Gastrocnemius medialis (tissue), 4 donors: ENCODE measurements at regions of chr1 and their contacts with region 1.

Region 1: DNA sequence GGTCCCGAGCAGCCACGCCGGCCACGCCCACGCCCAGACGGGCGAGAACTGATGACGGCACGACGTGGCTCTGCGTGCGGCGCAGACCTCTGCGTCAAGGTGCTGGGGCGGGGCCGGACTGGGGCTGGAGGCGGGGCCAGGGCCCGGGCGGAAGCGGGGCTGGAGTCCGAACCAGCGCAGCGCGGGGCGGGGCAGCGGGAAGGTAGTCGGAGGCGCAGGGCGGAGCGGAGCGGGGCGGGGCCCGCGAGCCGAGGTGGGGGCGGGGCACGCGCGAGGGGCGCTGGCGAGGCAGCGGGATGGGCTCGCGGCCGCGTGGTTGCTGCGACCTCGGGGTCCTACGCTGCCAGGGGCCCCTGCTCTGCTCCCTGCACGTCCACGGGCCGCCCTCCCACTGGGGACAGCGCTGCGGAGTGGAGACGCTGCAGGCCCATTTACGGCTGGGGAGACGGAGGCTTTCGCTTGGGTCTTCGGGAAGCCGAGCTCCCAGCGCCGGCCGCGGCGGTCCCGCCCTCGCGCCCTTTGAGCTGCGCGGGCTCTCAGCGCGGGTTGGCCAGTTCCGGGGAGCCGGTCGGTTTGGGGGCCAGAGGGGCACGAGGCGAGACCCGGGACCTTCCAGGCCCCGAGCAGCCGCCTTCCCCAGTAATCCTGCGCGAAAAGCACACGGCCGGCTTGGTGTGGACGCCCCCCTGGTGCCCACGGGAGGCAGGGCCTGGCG is at the start of gene PEX10:
- DNase-seq: peak; percentile 94 to 95
- ATAC-seq: peak; percentile 91 to 93
- H3K4me3 ChIP-seq: peak within 1 kb of the TSS; percentile 64 to 97 (median 74)
- H3K27ac ChIP-seq: peak within 1 kb of the TSS; percentile 67 to 81 (median 78)
- H3K4me1 ChIP-seq: peaks cover 22 to 24% of the 10 kb centered on the region in 2 donors
- H3K27me3 ChIP-seq: peaks cover 14 to 26% (median 22%) of the 10 kb centered on the region in 3 donors
- CTCF ChIP-seq: no peak
- POLR2A ChIP-seq: peak in 1 of 2 donors; percentile 55
- total RNA-seq, gene PEX10: 19.2 to 25.7 (median 22.6) TPM

Region 2: DNA sequence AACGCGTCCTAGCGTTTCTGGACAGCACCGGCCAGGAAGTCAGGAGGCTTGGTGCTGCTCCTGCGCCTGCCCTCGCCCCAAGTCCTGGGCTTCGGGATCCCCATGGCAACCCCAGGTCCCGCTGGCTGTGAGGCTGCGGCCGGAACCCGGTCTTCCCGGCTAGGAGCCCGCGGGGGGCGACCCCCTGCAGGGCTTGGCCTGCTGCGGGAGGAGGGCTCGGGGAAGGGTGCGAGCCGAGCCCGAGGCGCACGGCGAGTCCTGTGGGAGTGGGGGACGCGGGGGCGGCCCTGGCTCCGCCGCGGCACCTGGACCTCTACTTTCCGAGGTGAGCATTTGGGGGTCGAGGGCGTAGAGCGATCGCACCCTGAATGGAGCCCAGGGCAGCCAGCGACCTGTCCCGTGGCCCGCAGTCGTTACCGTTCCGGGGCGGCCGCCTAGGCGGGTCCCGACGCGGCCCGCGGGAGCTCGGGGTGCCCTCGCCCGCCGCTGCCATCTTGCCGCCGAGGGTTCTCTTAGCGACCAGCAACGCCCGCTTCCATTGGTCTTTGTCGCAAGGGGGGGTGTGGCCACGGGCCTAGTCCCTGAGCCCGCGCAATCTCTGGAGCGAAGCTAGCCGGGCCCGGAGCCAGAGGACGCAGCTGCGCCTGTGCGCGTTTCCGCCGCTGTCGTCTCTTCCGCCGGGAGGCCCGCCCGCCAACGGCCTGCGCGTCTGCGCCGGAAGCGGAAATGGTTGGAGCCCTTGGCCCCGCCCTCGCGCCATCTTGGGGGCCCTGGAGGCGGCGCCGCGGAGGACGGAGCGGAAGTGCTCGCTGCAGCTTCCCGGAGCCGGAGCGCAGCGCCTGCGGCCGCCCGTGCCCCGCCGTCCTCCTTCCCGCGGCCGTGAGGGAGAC is 21.4 kb before region 1 on chr1 and contains the starts of genes MORN1 and RER1:
- in situ Hi-C with region 1: no loop called
- intact Hi-C with region 1: loop called (anchors 1 kb)
- DNase-seq: peak; percentile 98
- ATAC-seq: peak; percentile 97 to 99
- H3K4me3 ChIP-seq: peak within 1 kb of the TSS; percentile 77 to 86 (median 84)
- H3K27ac ChIP-seq: peak within 1 kb of the TSS; percentile 67 to 90 (median 85)
- H3K4me1 ChIP-seq: peaks cover 27 to 33% of the 10 kb centered on the region in 2 donors
- H3K27me3 ChIP-seq: no peaks in the 10 kb centered on the region
- CTCF ChIP-seq: no peak
- POLR2A ChIP-seq: peak; percentile 82 to 96
- total RNA-seq, gene MORN1: 1.9 to 4.7 (median 3.5) TPM
- total RNA-seq, gene RER1: 51.1 to 60.5 (median 55.4) TPM

Region 3: DNA sequence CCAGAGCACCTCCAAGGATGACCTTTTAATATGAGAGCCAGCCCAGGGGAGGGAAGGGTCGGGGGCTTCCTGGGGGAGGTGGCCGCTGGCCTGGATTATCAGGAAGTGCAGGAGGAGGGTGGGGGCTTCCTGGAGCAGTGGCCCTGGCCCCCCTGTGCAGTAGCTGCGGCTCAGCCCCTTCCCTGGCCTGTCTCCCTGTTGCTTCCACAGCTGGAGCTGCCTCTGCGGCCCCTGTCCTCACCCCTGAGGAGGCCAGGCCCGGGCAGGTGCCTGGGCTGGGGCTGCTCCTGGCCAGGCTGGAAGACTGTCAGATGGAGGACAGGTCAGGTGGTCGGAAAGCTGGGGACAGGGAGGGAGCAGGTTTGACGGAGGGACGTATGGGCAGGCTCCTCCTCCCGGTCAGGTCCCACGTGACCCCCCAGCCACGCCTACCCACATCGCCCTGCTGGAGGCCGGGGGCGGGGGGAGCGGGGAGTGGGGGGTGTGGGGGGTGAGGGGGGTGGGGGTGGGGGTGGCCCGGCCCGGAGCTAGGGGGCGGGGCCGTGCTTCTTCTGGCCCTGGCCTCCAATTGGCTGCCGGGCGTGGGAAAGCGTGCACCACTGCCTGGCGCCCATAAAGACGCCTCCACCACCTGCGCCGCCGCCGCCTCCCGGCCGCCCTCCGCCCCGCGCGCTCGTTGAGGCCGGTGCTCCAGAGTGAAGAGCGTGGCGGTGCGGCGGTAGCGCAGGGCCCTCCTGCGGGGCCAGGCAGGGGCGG is 133.3 kb after region 1 on chr1:
- in situ Hi-C with region 1: loop called (anchors 10 kb)
- intact Hi-C with region 1: loop called (anchors 1 kb)
- DNase-seq: peak; percentile 73 to 76
- ATAC-seq: peak in 1 of 2 donors; percentile 55
- H3K4me3 ChIP-seq: peak overlapping the region; percentile 53 to 63 (median 56)
- H3K27ac ChIP-seq: peak overlapping the region; percentile 86 to 94 (median 88)
- H3K4me1 ChIP-seq: peaks cover 14 to 35% of the 10 kb centered on the region in 2 donors
- H3K27me3 ChIP-seq: peaks cover 14 to 35% (median 29%) of the 10 kb centered on the region in 3 donors
- CTCF ChIP-seq: no peak
- POLR2A ChIP-seq: peak in 1 of 2 donors; percentile 13

Region 4: GRCh38 chr1:2786329-2787162 is 373.9 kb after region 1 on chr1:
- in situ Hi-C with region 1: loop called in 1 of 4 experiments (anchors 25 kb)
- intact Hi-C with region 1: loop called (anchors 1 kb)
- DNase-seq: no peak
- ATAC-seq: no peak
- H3K4me3 ChIP-seq: no peak overlapping the region
- H3K27ac ChIP-seq: no peak overlapping the region
- H3K4me1 ChIP-seq: no peaks in the 10 kb centered on the region
- H3K27me3 ChIP-seq: peaks cover 36 to 42% (median 38%) of the 10 kb centered on the region in 3 donors
- CTCF ChIP-seq: peak; percentile 2 to 60 (median 54)
- POLR2A ChIP-seq: no peak